Activated CD4-positive, alpha-beta T cell treated with anti-CD3 and anti-CD28 coated beads, Interleukin-2, amount 10 ng/mL, durations not matched to agents 24 days and 14 days (primary cell): ENCODE measurements at regions of chr15 and their contacts with region 1.

Region 1: DNA sequence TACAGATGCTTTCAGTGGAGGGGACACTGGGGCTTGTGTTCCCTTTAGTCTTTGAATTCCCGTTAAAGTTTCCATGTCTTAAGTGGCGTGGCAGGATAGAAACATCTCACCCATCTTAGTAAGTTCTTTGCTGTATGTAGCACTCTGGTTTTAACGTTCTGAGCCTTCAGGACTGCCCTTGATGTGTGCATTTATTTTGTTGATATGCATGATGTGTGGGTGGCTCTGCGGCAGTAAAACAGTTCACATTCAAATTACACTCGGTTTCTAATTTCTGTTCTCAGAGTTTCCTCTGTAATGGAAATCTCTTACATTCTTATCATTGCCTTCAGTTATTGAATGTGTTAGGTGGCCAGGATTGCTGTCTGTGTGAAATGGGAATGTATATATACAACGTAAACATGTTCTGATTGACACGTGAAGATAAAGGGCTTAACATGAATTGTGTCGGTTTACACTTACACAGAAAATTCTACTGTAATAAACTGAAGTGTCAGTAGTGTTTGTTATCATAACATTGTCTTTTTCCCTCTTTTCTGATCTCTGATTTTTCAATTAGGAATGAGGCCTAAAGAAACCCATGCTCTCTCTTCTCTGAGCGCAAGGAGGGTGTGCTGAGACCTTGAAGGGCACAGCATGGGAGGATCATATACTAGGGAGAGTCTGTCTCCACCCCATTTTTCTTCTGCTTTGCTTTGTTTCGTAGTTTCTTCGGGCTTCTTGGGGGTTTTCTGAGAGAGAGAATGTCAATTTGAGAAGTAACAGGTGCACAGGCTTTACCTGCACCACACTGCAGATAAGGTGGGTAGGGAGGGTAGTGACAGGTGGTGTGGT is 51.5 kb downstream of the IGF1R start:
- DNase-seq: no peak
- H3K4me3 Mint-ChIP-seq: peak overlapping the region; percentile 48
- H3K27ac Mint-ChIP-seq: peak overlapping the region; percentile 79
- H3K4me1 Mint-ChIP-seq: peaks cover 37% of the 10 kb centered on the region
- H3K27me3 Mint-ChIP-seq: no peaks in the 10 kb centered on the region

Region 2: GRCh38 chr15:98484908-98485307 is 214.9 kb before region 1 on chr15:
- intact Hi-C with region 1: no loop called
- DNase-seq: no peak
- H3K4me3 Mint-ChIP-seq: no peak overlapping the region
- H3K27ac Mint-ChIP-seq: no peak overlapping the region
- H3K4me1 Mint-ChIP-seq: no peaks in the 10 kb centered on the region
- H3K27me3 Mint-ChIP-seq: no peaks in the 10 kb centered on the region

Region 3: DNA sequence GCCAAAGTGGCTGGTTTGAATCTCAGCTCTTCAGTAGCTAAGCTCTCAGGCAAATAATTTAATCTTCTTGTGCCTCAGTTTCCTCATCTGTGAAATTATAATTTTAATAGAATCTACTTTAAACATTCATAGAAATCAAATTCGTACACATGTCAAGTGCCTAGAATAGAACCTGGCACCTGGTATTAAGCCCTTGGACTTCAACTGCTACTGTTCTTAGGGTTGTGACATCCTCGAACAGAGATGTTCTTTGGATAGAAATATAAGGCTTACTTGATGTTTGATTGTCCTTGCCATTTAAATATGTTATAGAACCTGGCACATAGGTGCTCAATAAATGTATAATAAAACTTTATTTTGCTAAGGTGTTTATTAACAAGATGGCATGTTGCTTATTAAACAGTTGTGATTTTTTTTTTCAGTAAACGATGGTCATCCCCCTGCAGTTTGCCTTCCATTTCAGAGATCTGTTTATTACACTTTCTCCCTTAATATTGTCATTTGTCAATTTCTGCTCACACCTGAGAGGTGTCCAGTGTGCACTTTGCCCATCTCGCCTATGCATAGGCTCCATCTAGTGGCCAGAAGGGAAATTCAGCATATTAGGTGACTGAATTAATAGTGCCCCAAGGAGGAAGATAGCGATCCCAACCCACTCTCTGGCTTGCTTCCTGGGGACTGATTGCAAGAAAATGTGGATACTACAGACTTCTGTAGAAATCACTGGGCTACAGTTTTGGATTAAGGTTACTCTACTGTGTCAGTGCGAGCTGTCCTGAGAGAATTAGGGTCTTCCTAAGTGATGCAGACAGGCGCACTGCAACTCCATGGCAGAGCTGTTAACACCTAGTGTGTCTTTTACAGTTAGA is 40.7 kb before region 1 on chr15:
- intact Hi-C with region 1: loop called (anchors 5 kb)
- DNase-seq: peak; percentile 84
- H3K4me3 Mint-ChIP-seq: no peak overlapping the region
- H3K27ac Mint-ChIP-seq: no peak overlapping the region
- H3K4me1 Mint-ChIP-seq: peaks cover 7% of the 10 kb centered on the region
- H3K27me3 Mint-ChIP-seq: peaks cover 12% of the 10 kb centered on the region

Region 4: GRCh38 chr15:98668566-98669308 is 31.1 kb before region 1 on chr15:
- intact Hi-C with region 1: loop called (anchors 1 kb)
- DNase-seq: peak; percentile 84
- H3K4me3 Mint-ChIP-seq: peak overlapping the region; percentile 32
- H3K27ac Mint-ChIP-seq: peak overlapping the region; percentile 32
- H3K4me1 Mint-ChIP-seq: peaks cover 50% of the 10 kb centered on the region
- H3K27me3 Mint-ChIP-seq: no peaks in the 10 kb centered on the region

Region 5: DNA sequence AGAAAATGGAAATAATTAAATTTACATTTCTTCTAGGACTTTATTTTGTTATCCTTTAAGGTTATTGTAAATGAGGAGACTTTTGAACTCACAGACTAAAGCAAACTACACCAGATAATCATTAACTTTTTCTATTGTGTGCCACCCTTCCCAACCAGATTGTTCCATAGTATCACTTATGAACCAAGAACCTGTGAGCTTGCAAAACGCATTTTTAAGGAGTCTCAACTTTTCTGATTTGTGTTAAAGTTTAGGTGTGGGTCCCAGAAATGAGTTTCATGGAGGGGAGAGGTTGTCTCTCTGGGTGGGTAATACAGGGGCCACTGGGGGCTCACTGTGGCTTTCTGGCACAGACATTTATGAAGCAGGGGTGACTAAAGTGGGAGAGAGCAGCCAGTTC is 24.2 kb after region 1 on chr15:
- intact Hi-C with region 1: no loop called
- DNase-seq: no peak
- H3K4me3 Mint-ChIP-seq: no peak overlapping the region
- H3K27ac Mint-ChIP-seq: no peak overlapping the region
- H3K4me1 Mint-ChIP-seq: peaks cover 25% of the 10 kb centered on the region
- H3K27me3 Mint-ChIP-seq: no peaks in the 10 kb centered on the region

Region 6: GRCh38 chr15:98734466-98735199 is 34.8 kb after region 1 on chr15:
- intact Hi-C with region 1: loop called (anchors 5 kb)
- DNase-seq: no peak
- H3K4me3 Mint-ChIP-seq: no peak overlapping the region
- H3K27ac Mint-ChIP-seq: no peak overlapping the region
- H3K4me1 Mint-ChIP-seq: peaks cover 30% of the 10 kb centered on the region
- H3K27me3 Mint-ChIP-seq: no peaks in the 10 kb centered on the region

Region 7: DNA sequence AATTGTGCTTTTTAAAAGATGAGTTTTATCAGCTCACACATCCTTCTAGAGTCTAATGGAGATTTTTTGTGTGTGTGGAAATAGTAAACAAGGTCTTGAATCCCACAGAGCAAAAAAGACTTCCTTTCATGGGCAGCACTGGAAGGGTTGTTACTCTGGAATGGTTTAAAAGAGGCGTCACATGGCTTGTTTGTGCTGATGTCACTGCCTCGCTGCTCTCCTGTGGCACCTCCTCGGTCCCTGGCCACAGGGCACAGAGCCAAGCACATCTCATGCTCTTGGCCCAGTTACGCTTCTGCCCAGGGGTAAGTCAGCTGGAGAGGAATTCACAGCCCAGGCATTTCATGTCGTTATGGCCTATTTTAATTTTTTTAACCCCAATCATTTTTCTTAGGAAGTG is 254.6 kb after region 1 on chr15:
- intact Hi-C with region 1: no loop called
- DNase-seq: no peak
- H3K4me3 Mint-ChIP-seq: no peak overlapping the region
- H3K27ac Mint-ChIP-seq: no peak overlapping the region
- H3K4me1 Mint-ChIP-seq: peaks cover 21% of the 10 kb centered on the region
- H3K27me3 Mint-ChIP-seq: no peaks in the 10 kb centered on the region